Cardiac septum (tissue), 1 donor: ENCODE measurements at regions of chrX and their contacts with region 1.

Region 1: DNA sequence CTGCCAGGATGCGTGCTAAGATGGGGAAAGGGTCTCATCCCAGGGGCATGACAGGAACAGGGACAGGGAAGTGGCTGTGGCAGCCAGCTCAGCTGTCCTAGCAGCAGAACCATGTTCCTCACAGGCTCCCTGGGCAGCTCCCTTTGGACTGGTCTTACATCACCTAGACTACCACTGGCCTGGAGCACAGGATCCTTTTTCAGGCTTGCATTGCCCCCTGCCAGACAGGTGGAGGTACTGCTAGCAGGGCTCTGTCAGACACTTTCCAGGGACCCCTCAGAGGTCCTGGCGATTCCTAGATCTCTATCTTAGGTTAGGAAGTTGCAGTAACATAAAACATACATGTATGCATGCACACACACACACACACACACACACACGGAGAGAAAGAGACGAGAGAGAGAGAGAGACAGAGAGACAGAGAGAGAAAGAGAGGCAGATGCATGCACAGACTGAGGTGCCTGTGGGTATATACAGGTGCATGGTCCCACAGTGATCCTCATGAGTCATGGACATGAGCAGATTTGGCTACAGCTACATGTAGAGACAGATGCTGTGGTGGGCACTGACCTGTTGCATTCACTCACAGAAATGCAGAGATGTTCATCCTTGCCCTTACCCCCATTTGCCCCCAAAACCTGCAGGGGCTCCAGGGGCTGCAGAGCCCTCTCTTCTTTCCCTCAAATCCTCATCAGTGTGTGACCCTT is 63.6 kb downstream of the STARD8 start:
- DNase-seq: no peak

Region 2: DNA sequence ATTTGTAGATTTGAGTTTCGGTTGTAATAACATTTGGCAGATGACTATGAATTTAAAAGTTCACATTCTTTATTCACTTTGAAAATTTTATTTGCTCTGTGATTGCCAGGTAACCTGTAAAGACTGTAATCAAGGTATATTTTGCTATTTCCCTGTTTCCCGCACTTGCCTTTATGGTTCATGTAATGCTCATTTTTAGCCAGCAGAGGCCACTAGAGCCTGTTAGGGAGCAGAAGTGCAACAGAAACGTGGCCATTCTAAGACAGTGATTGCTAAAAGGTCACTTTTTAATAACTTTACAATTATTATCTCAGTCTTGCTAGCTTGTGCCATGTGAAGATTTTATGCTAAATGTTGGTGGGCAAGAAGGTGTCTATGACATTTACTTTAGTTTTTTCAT is 199.8 kb before region 1 on chrX:
- intact Hi-C with region 1: loop called (anchors 5 kb)
- DNase-seq: no peak

Region 3: DNA sequence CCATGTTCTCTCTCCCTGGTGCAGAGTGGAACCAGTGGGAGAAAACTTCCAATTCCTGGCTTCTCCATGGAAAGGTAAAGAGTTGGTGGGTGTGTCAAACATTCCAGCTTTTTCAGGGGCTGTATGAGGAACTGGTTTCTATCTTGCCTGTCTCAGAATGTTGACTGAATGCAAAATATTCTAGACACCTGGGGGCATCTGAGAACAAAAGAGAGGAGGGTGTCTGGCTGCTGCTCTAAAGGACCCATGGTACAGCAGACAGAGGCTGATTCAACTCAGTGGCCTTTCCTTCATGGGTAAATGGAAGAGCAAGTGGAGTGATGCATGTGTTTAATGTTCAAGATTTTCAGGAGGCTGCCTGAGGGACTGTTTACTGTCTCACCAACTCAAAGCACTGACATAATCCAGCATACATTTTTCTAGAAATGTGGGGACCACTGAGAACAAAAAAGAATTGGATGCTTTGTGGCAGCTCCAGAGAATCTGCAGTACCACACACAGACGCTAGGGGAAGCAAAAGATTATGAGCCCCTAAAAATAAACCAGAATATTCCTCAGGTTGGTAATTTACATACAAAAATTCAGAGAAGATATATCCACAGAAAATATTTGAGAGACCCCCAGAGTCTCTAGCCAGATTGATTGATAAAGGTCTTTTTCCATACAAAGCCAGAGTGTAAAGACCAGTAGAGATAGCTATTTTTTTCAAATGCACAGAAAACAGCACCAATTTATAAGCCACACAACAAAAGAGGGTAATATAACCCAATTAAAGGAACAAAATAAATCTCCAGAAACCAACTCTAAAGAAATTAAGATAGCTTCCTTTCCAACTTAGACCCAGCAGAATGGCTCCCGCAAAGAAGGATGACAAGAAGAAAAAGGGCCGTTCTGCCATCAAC is 111.5 kb before region 1 on chrX:
- intact Hi-C with region 1: loop called (anchors 10 kb)
- DNase-seq: no peak

Region 4: DNA sequence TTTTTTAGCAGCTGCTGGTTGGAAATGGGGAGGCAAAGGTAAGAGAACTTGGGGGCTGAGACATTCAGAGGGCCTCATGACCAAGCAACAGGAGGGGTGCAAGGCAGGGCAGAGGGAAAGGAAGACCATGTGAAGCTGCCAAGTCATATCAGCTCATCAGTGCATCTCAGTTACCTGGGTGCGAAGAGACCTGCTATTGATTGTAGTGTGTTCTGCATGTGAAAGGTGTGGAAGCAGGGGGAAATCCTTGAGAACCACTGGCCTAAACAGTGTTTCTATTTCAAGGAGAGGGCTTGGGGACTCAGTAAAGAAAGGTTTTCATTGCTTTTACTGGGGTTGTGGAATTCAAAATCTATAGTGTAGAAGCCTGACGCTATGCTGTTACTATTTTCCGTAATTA is 857.8 kb after region 1 on chrX:
- intact Hi-C with region 1: no loop called
- DNase-seq: no peak